Sigmoid colon (tissue), 7 donors: ENCODE measurements at regions of chr18 and their contacts with region 1.

Region 1: DNA sequence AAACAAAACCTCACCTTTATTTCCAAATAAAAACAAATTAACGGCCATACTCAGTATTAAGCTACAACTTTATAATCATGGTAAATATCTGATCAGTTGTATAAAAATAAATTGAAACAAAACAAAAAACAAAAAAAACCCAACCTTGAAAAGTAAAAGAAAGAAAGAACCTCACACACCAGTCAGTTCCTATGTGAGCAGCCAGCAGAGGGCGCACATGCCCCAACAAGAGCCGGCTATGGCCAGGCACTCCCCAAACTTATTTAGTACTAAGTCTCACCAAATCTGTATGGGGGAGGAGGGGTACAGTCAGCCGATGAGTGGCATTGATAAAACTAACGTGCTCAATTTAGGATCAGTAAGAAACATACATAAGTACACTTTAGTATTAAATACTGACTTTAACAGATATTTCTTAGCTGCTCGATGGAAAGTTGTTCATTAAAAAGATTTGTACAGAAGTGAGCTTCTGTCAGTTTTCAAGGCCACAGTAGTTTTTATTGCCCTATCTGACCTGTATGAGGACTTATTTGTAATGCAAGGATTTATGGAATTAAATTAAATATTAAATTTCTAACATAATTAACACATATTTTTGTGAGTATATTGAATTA is 172.6 kb downstream of the TCF4 start:
- DNase-seq: peak; percentile 92
- H3K4me3 ChIP-seq: no peak overlapping the region
- H3K27ac ChIP-seq: peak overlapping the region in 1 of 4 donors; percentile 10
- H3K4me1 ChIP-seq: peaks cover 0 to 29% (median 11%) of the 10 kb centered on the region in 4 donors
- H3K27me3 ChIP-seq: no peaks in the 10 kb centered on the region
- CTCF ChIP-seq: peak; percentile 72 to 89 (median 85)
- EP300 ChIP-seq: no peak
- POLR2A ChIP-seq: no peak

Region 2: DNA sequence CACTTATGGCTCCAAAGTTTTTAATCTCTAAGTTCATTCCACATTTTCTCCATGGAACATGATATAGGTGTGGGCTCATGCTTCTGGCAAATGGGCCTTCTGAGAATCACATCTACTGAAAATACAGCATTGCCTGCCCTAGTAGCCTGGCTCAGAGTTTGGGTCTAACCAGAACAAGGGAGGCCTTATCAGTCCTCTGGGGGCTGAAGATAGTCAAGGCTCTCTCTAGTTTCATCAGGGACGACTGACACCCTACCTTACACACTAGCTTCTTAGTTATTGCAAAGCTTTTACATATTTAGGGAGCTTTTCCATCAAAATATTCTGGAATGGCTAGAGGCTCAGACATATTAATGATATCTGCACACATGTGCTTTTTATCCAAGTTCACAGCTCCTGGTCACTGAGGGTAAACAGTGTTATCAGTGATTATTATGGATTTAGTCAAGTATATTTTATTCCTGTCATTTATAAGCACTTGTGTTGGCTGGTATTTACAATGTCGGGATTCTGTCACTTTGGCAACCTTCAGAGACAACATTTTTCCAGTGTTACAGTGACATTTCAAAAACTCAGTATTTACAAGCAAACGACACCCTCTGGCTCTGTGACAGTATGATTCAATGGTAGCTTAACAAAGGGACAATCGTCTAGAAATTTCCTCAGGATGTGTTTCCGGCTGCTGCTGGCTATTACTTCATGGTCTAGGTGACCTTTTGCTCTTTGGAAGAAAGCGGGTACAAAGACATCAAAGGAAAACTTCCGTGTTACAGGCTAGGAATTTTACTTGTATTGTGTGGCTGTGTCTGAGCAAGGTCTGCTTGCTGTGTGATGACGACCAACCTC is 28.0 kb before region 1 on chr18:
- intact Hi-C with region 1: no loop called
- DNase-seq: no peak
- H3K4me3 ChIP-seq: no peak overlapping the region
- H3K27ac ChIP-seq: peak overlapping the region in 3 of 4 donors; percentile 23 to 71 (median 49)
- H3K4me1 ChIP-seq: peaks cover 0 to 20% (median 5%) of the 10 kb centered on the region in 4 donors
- H3K27me3 ChIP-seq: no peaks in the 10 kb centered on the region
- CTCF ChIP-seq: no peak
- EP300 ChIP-seq: no peak
- POLR2A ChIP-seq: no peak

Region 3: GRCh38 chr18:55485666-55486065 is 70.3 kb after region 1 on chr18:
- intact Hi-C with region 1: no loop called
- DNase-seq: no peak
- H3K4me3 ChIP-seq: no peak overlapping the region
- H3K27ac ChIP-seq: no peak overlapping the region
- H3K4me1 ChIP-seq: peaks cover 0 to 31% (median 14%) of the 10 kb centered on the region in 4 donors
- H3K27me3 ChIP-seq: no peaks in the 10 kb centered on the region
- CTCF ChIP-seq: no peak
- EP300 ChIP-seq: no peak
- POLR2A ChIP-seq: no peak

Region 4: DNA sequence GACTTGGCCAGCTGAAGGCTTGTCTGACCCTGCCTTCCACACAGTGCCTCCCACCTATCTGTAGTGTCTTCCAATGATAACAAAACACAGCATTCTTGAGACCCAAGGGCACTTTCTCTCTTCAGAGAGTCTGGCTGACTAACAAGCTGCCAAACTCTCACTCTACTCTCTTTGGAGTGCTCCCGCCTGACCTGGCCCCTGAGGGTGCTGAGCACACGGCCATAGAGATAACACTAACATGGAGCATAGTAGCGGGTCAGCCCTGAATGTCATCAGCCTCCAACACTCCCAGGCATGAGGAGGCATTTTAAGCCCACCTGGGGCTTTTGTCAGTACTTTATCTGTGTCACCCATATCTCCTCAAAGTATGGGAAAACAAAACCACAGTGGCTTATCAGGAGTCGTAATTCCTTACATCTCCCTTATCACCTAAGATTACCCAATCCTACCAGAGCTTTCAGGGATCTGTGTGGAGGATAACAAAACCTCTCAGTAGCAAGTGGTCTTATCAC is 332.9 kb after region 1 on chr18:
- intact Hi-C with region 1: no loop called
- DNase-seq: no peak
- H3K4me3 ChIP-seq: no peak overlapping the region
- H3K27ac ChIP-seq: no peak overlapping the region
- H3K4me1 ChIP-seq: no peaks in the 10 kb centered on the region
- H3K27me3 ChIP-seq: no peaks in the 10 kb centered on the region
- CTCF ChIP-seq: no peak
- EP300 ChIP-seq: no peak
- POLR2A ChIP-seq: no peak

Region 5: GRCh38 chr18:55781481-55781957 is 366.2 kb after region 1 on chr18:
- intact Hi-C with region 1: loop called (anchors 1 kb)
- DNase-seq: no peak
- H3K4me3 ChIP-seq: no peak overlapping the region
- H3K27ac ChIP-seq: no peak overlapping the region
- H3K4me1 ChIP-seq: peaks cover 0 to 10% (median 0%) of the 10 kb centered on the region in 4 donors
- H3K27me3 ChIP-seq: no peaks in the 10 kb centered on the region
- CTCF ChIP-seq: peak in 3 of 4 experiments; percentile 28 to 57 (median 39)
- EP300 ChIP-seq: no peak
- POLR2A ChIP-seq: no peak

Region 6: DNA sequence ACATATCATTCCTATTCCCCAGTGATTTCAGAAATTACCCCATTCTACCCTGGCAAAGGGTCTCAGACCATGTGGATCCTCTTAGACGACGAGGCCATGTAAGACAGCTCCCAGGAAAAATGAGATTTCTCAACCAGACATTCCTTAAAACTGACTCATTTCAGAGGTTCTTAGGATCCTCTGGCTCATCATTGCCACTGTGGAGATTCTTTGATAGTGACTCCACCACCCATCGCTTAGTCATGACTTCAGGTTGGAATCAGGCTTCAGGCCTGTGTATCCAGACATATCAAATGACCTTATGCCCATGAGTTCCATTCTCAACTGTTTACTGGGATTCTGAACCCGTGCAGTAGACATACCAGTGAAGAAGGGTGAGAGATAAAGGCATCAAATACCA is 418.2 kb after region 1 on chr18:
- intact Hi-C with region 1: no loop called
- DNase-seq: no peak
- H3K4me3 ChIP-seq: no peak overlapping the region
- H3K27ac ChIP-seq: no peak overlapping the region
- H3K4me1 ChIP-seq: no peaks in the 10 kb centered on the region
- H3K27me3 ChIP-seq: no peaks in the 10 kb centered on the region
- CTCF ChIP-seq: no peak
- EP300 ChIP-seq: no peak
- POLR2A ChIP-seq: no peak

Region 7: DNA sequence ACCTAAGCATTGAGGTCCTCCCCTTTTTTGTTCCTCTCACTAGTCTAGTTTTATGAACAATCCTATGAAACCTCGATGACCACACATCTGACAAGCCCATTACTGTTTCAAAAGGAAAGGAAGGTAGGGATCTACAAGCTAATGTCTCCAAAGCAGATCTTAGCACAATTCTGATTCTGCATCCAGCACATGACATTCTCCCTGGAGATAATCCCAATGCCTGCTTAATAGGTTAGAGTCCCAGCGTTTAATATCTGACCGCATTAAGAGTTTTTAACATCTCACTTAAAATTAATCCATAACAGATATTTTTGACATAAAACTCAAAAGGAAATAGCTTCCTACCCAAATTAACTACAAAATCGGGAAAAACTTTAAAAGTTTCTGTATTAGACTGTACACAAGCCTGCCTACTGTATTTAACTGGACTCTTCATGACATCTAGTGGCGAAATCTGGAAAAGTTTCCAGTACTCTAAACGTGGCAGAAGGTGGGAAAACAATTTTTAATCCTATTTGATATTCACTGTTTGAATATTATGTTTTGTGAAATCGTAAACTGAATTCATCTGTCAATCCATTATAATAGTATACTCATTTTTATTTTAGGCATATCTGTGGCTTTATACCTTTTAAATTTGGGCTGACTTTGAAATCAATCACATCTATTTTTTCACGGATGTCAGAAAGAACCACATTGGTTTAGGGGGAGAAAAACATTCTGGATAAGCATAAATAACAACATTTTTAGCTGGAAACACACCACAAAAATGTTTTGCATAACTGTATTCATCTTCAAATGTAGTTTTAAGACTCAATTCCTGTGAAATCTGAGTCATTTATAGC is 1160.7 kb after region 1 on chr18:
- intact Hi-C with region 1: loop called (anchors 2 kb)
- DNase-seq: no peak
- H3K4me3 ChIP-seq: no peak overlapping the region
- H3K27ac ChIP-seq: no peak overlapping the region
- H3K4me1 ChIP-seq: peaks cover 0 to 16% (median 9%) of the 10 kb centered on the region in 4 donors
- H3K27me3 ChIP-seq: no peaks in the 10 kb centered on the region
- CTCF ChIP-seq: peak; percentile 28 to 66 (median 62)
- EP300 ChIP-seq: no peak
- POLR2A ChIP-seq: no peak